Sigmoid colon (tissue), 7 donors: ENCODE measurements at regions of chr3 and their contacts with region 1.

Region 1: GRCh38 chr3:96863129-96863740 is 48.8 kb downstream of the EPHA6 start:
- DNase-seq: peak; percentile 59
- H3K4me3 ChIP-seq: no peak overlapping the region
- H3K27ac ChIP-seq: no peak overlapping the region
- H3K4me1 ChIP-seq: peaks cover 0 to 25% (median 5%) of the 10 kb centered on the region in 4 donors
- H3K27me3 ChIP-seq: no peaks in the 10 kb centered on the region
- CTCF ChIP-seq: peak; percentile 29 to 61 (median 58)
- EP300 ChIP-seq: no peak
- POLR2A ChIP-seq: no peak

Region 2: GRCh38 chr3:96666073-96666472 is 197.2 kb before region 1 on chr3:
- intact Hi-C with region 1: no loop called
- DNase-seq: no peak
- H3K4me3 ChIP-seq: no peak overlapping the region
- H3K27ac ChIP-seq: no peak overlapping the region
- H3K4me1 ChIP-seq: no peaks in the 10 kb centered on the region
- H3K27me3 ChIP-seq: no peaks in the 10 kb centered on the region
- CTCF ChIP-seq: no peak
- EP300 ChIP-seq: no peak
- POLR2A ChIP-seq: no peak

Region 3: GRCh38 chr3:97010881-97011664 is 147.8 kb after region 1 on chr3:
- intact Hi-C with region 1: loop called (anchors 5 kb)
- DNase-seq: no peak
- H3K4me3 ChIP-seq: no peak overlapping the region
- H3K27ac ChIP-seq: peak overlapping the region in 2 of 4 donors; percentile 5 to 18
- H3K4me1 ChIP-seq: peaks cover 0 to 13% (median 5%) of the 10 kb centered on the region in 4 donors
- H3K27me3 ChIP-seq: no peaks in the 10 kb centered on the region
- CTCF ChIP-seq: no peak
- EP300 ChIP-seq: no peak
- POLR2A ChIP-seq: no peak

Region 4: GRCh38 chr3:97232393-97233013 is 369.3 kb after region 1 on chr3:
- intact Hi-C with region 1: loop called (anchors 10 kb)
- DNase-seq: peak; percentile 90
- H3K4me3 ChIP-seq: no peak overlapping the region
- H3K27ac ChIP-seq: peak overlapping the region in 3 of 4 donors; percentile 75 to 79 (median 75)
- H3K4me1 ChIP-seq: peaks cover 0 to 43% (median 18%) of the 10 kb centered on the region in 4 donors
- H3K27me3 ChIP-seq: no peaks in the 10 kb centered on the region
- CTCF ChIP-seq: no peak
- EP300 ChIP-seq: peak; percentile 51 to 91 (median 84)
- POLR2A ChIP-seq: no peak

Region 5: DNA sequence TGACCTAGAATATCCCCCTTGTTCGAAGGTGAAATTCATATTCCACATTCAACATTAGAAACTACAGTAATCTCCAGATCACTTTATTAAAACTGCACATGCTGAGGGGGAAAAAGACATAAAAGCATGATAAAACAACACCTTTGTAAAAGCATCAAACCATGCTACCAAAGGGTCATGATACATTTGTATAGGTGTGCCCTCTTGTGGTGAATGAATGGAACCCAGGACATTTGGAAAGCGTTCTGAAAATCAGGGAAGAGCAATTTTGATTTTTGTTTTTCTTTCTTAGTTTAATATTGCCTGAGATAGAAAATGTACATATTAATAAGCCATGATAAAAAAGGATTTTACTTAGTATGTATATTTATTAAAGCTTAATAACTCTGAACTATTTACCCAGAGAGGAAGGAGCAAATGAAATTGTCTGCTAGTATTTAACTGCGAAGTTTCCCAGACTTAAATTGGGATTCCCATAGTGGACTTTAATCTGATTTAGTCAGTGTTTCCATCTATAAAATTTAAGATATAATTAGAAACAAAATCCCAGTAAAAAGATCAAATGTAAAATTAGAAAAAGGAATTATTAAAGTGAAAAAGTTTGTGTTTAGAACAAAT is 795.5 kb after region 1 on chr3:
- intact Hi-C with region 1: loop called (anchors 10 kb)
- DNase-seq: no peak
- H3K4me3 ChIP-seq: no peak overlapping the region
- H3K27ac ChIP-seq: no peak overlapping the region
- H3K4me1 ChIP-seq: no peaks in the 10 kb centered on the region
- H3K27me3 ChIP-seq: no peaks in the 10 kb centered on the region
- CTCF ChIP-seq: peak in 2 of 4 experiments; percentile 30 to 53
- EP300 ChIP-seq: no peak
- POLR2A ChIP-seq: no peak

Region 6: GRCh38 chr3:97719156-97719821 is 856.1 kb after region 1 on chr3:
- intact Hi-C with region 1: loop called (anchors 2 kb)
- DNase-seq: peak; percentile 74
- H3K4me3 ChIP-seq: no peak overlapping the region
- H3K27ac ChIP-seq: no peak overlapping the region
- H3K4me1 ChIP-seq: no peaks in the 10 kb centered on the region
- H3K27me3 ChIP-seq: no peaks in the 10 kb centered on the region
- CTCF ChIP-seq: peak; percentile 15 to 84 (median 60)
- EP300 ChIP-seq: no peak
- POLR2A ChIP-seq: no peak